Activated naive CD4-positive, alpha-beta T cell treated with anti-CD3 and anti-CD28 coated beads for 36 hours (primary cell): ENCODE measurements at regions of chr14 and their contacts with region 1.

Region 1: GRCh38 chr14:94363151-94363624 is 25.2 kb downstream of the SERPINA1 start:
- DNase-seq: no peak
- H3K4me3 Mint-ChIP-seq: no peak overlapping the region
- H3K27ac Mint-ChIP-seq: no peak overlapping the region
- H3K4me1 Mint-ChIP-seq: no peaks in the 10 kb centered on the region
- H3K27me3 Mint-ChIP-seq: peaks cover 9% of the 10 kb centered on the region

Region 2: DNA sequence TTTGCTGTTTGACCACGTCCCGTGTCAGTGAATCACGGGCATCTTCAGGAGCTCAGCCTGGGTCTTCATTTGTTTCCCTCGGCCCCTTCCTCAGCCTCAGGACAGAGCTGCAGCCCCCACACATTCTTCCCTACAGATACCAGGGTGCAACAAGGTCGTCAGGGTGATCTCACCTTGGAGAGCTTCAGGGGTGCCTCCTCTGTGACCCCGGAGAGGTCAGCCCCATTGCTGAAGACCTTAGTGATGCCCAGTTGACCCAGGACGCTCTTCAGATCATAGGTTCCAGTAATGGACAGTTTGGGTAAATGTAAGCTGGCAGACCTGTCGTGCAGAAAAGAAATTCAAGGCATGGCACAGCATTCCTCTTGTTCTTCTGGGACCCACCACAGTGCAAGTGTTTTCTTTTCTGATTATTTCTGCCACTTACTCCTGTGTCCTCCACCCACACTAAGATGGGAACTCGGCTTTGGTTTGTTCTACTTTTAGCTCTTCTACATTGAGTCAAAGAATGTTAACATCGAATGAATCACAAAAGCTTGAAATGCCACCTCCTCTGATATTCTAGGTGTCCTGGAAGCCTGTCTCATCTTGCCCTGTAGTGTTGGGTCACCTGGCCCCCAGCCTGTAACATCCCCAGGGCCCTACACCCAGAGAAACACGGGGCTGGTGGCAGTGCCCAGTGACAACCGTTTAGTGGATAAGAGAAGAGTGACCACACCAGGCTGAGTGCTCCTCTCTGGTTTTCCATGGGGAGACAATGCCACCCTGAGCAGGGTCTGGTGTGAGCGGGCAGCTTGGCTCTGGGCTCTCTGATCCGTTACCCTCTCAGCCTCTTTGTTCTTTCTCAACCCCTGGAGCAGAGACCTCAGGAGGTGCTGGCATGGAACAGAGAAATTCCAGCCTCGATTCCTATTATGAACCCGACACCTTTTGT is 16.4 kb after region 1 on chr14:
- CTCF ChIA-PET with region 1: no interaction called
- intact Hi-C with region 1: loop called (anchors 2 kb)
- DNase-seq: no peak
- H3K4me3 Mint-ChIP-seq: no peak overlapping the region
- H3K27ac Mint-ChIP-seq: peak overlapping the region; percentile 24
- H3K4me1 Mint-ChIP-seq: peaks cover 13% of the 10 kb centered on the region
- H3K27me3 Mint-ChIP-seq: peaks cover 4% of the 10 kb centered on the region

Region 3: DNA sequence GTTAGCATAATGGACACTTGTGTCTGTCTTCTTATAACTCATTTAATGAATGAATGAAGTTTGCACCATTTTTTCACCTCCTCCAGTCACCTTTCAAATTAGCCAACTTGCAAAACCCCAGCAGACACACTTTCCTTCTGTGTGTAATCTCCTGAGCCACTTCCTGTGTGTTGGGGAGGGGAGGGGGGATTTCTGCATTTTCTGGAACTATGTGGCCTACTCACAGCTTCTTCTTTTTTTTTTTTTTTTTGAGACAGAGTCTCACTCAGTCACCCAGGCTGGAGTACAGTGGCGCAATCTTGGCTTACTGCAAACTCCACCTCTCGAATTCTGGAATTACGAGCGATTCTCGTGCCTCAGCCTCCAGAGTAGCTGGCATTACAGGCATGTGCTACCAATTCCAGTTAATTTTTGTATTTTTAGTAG is 29.3 kb after region 1 on chr14:
- CTCF ChIA-PET with region 1: no interaction called
- intact Hi-C with region 1: no loop called
- DNase-seq: peak; percentile 85
- H3K4me3 Mint-ChIP-seq: no peak overlapping the region
- H3K27ac Mint-ChIP-seq: peak overlapping the region; percentile 82
- H3K4me1 Mint-ChIP-seq: peaks cover 48% of the 10 kb centered on the region
- H3K27me3 Mint-ChIP-seq: no peaks in the 10 kb centered on the region